Transverse colon (tissue), 4 donors: ENCODE measurements at regions of chr2 and their contacts with region 1.

Region 1: GRCh38 chr2:147449323-147449991 is 395.4 kb upstream of the ACVR2A start:
- DNase-seq: no peak
- H3K4me3 ChIP-seq: no peak overlapping the region
- H3K27ac ChIP-seq: no peak overlapping the region
- H3K4me1 ChIP-seq: no peaks in the 10 kb centered on the region
- H3K27me3 ChIP-seq: no peaks in the 10 kb centered on the region
- CTCF ChIP-seq: no peak
- EP300 ChIP-seq: no peak
- POLR2A ChIP-seq: no peak

Region 2: GRCh38 chr2:147469471-147469870 is 20.0 kb after region 1 on chr2:
- in situ Hi-C with region 1: no loop called
- intact Hi-C with region 1: loop called (anchors 1 kb)
- DNase-seq: no peak
- H3K4me3 ChIP-seq: no peak overlapping the region
- H3K27ac ChIP-seq: no peak overlapping the region
- H3K4me1 ChIP-seq: peaks cover 0 to 3% (median 0%) of the 10 kb centered on the region in 4 donors
- H3K27me3 ChIP-seq: no peaks in the 10 kb centered on the region
- CTCF ChIP-seq: no peak
- EP300 ChIP-seq: no peak
- POLR2A ChIP-seq: no peak

Region 3: DNA sequence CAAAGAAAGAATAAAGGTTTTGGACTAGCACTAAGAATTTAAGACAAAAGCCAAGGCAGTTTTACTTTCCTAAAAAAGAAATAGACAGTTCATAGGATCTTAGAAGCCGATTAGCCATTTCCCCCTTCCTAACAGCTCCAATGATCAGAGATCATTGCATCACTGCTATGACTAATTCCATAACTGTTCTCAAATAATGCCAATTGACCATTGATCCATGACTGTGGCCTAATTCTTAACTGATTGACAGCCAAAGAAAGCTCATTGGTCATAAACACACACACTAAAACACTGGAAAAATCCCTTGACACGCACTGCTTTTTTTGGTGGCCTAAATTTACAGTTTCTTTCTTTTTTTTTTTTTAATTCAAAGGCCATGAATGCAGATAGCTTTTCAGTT is 50.3 kb after region 1 on chr2:
- in situ Hi-C with region 1: no loop called
- intact Hi-C with region 1: no loop called
- DNase-seq: no peak
- H3K4me3 ChIP-seq: no peak overlapping the region
- H3K27ac ChIP-seq: no peak overlapping the region
- H3K4me1 ChIP-seq: no peaks in the 10 kb centered on the region
- H3K27me3 ChIP-seq: no peaks in the 10 kb centered on the region
- CTCF ChIP-seq: no peak
- EP300 ChIP-seq: no peak
- POLR2A ChIP-seq: no peak

Region 4: GRCh38 chr2:147595200-147595599 is 145.7 kb after region 1 on chr2:
- in situ Hi-C with region 1: no loop called
- intact Hi-C with region 1: no loop called
- DNase-seq: peak; percentile 57
- H3K4me3 ChIP-seq: no peak overlapping the region
- H3K27ac ChIP-seq: no peak overlapping the region
- H3K4me1 ChIP-seq: peaks cover 0 to 19% (median 3%) of the 10 kb centered on the region in 4 donors
- H3K27me3 ChIP-seq: no peaks in the 10 kb centered on the region
- CTCF ChIP-seq: no peak
- EP300 ChIP-seq: no peak
- POLR2A ChIP-seq: no peak